Transverse colon (tissue), 4 donors: ENCODE measurements at regions of chr5 and their contacts with region 1.

Region 1: DNA sequence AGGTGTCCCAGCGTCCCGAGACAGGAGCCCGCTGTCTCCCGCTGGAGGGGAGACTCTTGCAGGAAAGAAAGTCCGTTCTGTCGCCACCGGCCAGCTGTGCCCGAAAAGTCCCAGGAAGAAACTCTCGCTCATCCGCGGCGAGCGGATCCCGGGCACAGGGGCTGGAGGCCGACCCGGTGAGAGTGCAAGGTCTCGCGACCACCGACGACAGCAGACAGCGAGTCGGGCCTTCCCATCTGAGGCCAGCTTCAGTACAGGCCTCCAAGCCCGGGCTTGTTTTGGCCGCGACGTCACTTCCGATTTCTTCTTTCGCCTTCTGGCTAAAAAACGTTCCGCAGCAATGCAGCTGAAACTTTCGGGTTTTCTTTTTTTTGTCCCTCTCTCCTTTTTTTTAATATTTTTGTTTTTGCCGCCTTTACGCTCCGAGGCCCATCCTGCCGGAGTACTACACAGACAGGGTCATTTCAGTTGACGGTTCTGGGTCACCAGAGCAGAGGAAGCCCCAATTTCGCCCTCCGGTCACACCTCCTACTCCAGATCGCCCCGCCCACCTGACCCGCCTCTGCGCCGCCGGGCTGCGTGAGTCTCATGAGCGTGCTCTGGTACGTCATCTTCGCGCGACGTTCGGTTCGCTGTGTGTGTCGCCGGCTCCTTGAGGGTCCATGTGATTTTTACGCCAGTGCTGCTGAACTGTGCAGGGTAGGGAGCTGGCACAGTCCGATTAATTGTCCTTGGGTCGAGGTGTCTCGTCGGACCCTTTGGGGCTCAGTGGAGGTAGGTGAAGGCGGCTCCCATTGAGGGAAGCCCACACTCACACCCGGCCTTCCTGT is at the starts of genes ANKRA2 and UTP15:
- DNase-seq: peak; percentile 100
- H3K4me3 ChIP-seq: peak within 1 kb of the TSS; percentile 61 to 80 (median 76)
- H3K27ac ChIP-seq: peak within 1 kb of the TSS; percentile 92 to 98 (median 96)
- H3K4me1 ChIP-seq: peaks cover 5 to 42% (median 22%) of the 10 kb centered on the region in 4 donors
- H3K27me3 ChIP-seq: no peaks in the 10 kb centered on the region
- CTCF ChIP-seq: peak in 1 of 5 experiments; percentile 10
- EP300 ChIP-seq: no peak
- POLR2A ChIP-seq: peak; percentile 63
- total RNA-seq, gene ANKRA2: 17.6 to 50.9 (median 22.2) TPM
- total RNA-seq, gene UTP15: 6.7 to 69.3 (median 23.3) TPM

Region 2: GRCh38 chr5:73673161-73673591 is 107.8 kb after region 1 on chr5:
- in situ Hi-C with region 1: no loop called
- intact Hi-C with region 1: no loop called
- DNase-seq: no peak
- H3K4me3 ChIP-seq: no peak overlapping the region
- H3K27ac ChIP-seq: peak overlapping the region; percentile 43 to 77 (median 64)
- H3K4me1 ChIP-seq: peaks cover 3 to 29% (median 17%) of the 10 kb centered on the region in 4 donors
- H3K27me3 ChIP-seq: no peaks in the 10 kb centered on the region
- CTCF ChIP-seq: no peak
- EP300 ChIP-seq: no peak
- POLR2A ChIP-seq: no peak

Region 3: DNA sequence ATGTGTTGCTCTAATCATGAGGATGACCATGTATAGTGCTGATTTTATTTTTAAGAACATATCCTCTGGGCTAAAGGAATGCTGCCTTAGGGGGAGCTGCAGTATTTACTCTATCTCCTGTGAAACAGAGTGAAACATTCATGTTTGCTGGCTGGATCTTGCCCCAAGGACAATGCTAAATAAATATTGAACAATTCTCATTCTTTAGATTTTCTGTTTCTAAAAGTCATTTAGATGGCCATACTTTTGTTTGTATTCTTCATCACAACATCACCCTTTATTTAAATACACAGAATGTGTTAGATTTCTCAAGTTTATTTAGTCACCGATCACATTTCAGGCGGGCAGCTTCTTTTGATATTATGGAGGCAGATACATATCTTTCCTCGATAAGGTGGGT is 164.0 kb after region 1 on chr5:
- in situ Hi-C with region 1: no loop called
- intact Hi-C with region 1: no loop called
- DNase-seq: no peak
- H3K4me3 ChIP-seq: no peak overlapping the region
- H3K27ac ChIP-seq: no peak overlapping the region
- H3K4me1 ChIP-seq: no peaks in the 10 kb centered on the region
- H3K27me3 ChIP-seq: no peaks in the 10 kb centered on the region
- CTCF ChIP-seq: no peak
- EP300 ChIP-seq: no peak
- POLR2A ChIP-seq: no peak

Region 4: GRCh38 chr5:74446725-74447241 is 881.4 kb after region 1 on chr5:
- in situ Hi-C with region 1: no loop called
- intact Hi-C with region 1: no loop called
- DNase-seq: no peak
- H3K4me3 ChIP-seq: no peak overlapping the region
- H3K27ac ChIP-seq: no peak overlapping the region
- H3K4me1 ChIP-seq: no peaks in the 10 kb centered on the region
- H3K27me3 ChIP-seq: no peaks in the 10 kb centered on the region
- CTCF ChIP-seq: no peak
- EP300 ChIP-seq: no peak
- POLR2A ChIP-seq: no peak

Region 5: DNA sequence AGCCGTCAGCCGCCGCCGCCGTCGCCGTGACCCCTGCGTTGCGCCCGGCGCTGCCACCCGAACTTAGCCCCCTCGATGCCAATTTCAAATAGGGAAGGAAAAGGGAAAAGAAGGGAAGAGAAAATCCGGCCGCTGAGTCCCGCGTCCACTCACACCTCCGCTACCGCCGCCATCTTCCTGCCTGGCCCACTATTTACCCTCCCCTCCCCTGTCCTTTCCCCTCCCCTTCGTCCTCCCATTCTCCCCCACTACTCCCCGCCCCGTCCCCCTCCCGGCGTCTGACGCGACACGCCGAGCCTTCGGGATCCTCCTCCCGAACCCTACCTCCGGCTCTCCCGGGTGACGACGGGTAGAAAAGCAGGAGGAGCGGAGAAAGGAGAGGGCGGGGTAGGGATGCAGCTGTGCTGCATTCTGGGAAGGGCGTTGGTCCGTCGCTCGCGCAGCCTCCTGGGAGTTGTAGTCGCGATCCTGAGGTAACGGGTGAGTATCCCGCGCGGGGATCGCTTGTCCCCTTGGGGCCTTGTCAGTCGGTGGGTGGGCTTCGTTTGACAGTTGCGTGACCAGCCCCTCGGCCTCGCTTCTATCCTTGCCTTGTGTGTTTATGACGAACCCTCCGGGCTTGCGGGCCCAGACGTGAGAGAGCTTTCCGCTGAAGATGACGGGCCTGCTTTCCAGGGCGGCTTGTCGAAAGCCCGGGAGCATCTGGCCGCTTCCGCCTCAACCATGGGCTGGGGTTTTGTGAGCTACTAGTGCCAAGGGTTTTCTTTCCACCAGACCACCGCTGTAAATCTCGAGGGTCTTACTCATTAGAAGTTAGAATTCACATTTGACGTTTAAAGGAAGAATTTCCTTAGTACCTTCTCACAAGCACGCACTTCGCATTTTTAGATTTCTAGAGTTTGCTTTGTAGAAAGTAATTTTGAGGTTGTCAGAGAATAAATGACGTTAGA is 1946.4 kb after region 1 on chr5 and contains the starts of genes CERT1 and POLK:
- in situ Hi-C with region 1: loop called in 1 of 4 experiments (anchors 25 kb)
- intact Hi-C with region 1: no loop called
- DNase-seq: peak; percentile 98
- H3K4me3 ChIP-seq: peak within 1 kb of the TSS; percentile 64 to 82 (median 79)
- H3K27ac ChIP-seq: peak within 1 kb of the TSS; percentile 90 to 94 (median 94)
- H3K4me1 ChIP-seq: peaks cover 12 to 49% (median 18%) of the 10 kb centered on the region in 4 donors
- H3K27me3 ChIP-seq: no peaks in the 10 kb centered on the region
- CTCF ChIP-seq: no peak
- EP300 ChIP-seq: no peak
- POLR2A ChIP-seq: peak; percentile 95
- total RNA-seq, gene CERT1: 33.2 to 59.5 (median 39.4) TPM
- total RNA-seq, gene POLK: 5.4 to 30.2 (median 18.5) TPM